ENCODE measurements at regions of chr9 and their contacts with region 1.

Region 1: GRCh38 chr9:38451162-38451561 is 26.9 kb upstream of the IGFBPL1 start:
- DNase-seq: no peak
- ATAC-seq: no peak
- H3K4me3 ChIP-seq: no peak overlapping the region
- H3K27ac ChIP-seq: no peak overlapping the region
- H3K4me1 ChIP-seq: no peaks in the 10 kb centered on the region
- H3K27me3 ChIP-seq: peaks cover 0 to 12% (median 0%) of the 10 kb centered on the region in 9 donors
- CTCF ChIP-seq: no peak
- POLR2A ChIP-seq: no peak

Region 2: GRCh38 chr9:38208206-38208901 is 242.8 kb before region 1 on chr9:
- intact Hi-C with region 1: loop called in 1 of 10 experiments (anchors 10 kb)
- DNase-seq: no peak
- ATAC-seq: no peak
- H3K4me3 ChIP-seq: no peak overlapping the region
- H3K27ac ChIP-seq: no peak overlapping the region
- H3K4me1 ChIP-seq: no peaks in the 10 kb centered on the region
- H3K27me3 ChIP-seq: peaks cover 0 to 3% (median 0%) of the 10 kb centered on the region in 9 donors
- CTCF ChIP-seq: no peak
- POLR2A ChIP-seq: no peak

Region 3: GRCh38 chr9:38294220-38294960 is 156.8 kb before region 1 on chr9:
- intact Hi-C with region 1: no loop called
- DNase-seq: no peak
- ATAC-seq: peak in 1 of 4 donors; percentile 40
- H3K4me3 ChIP-seq: no peak overlapping the region
- H3K27ac ChIP-seq: no peak overlapping the region
- H3K4me1 ChIP-seq: peaks cover 0 to 15% (median 7%) of the 10 kb centered on the region in 12 donors
- H3K27me3 ChIP-seq: no peaks in the 10 kb centered on the region
- CTCF ChIP-seq: no peak
- POLR2A ChIP-seq: no peak